Activated CD8-positive, alpha-beta T cell treated with anti-CD3 and anti-CD28 coated beads for 36 hours (primary cell): ENCODE measurements at regions of chr18 and their contacts with region 1.

Region 1: GRCh38 chr18:3062798-3063680 is 50.1 kb upstream of the LPIN2 start:
- DNase-seq: peak; percentile 88
- ATAC-seq: peak; percentile 32
- H3K4me3 Mint-ChIP-seq: peak overlapping the region; percentile 43
- H3K27ac Mint-ChIP-seq: peak overlapping the region; percentile 100
- H3K4me1 Mint-ChIP-seq: peaks cover 64% of the 10 kb centered on the region
- H3K27me3 Mint-ChIP-seq: no peaks in the 10 kb centered on the region
- CTCF ChIP-seq: peak; percentile 92

Region 2: DNA sequence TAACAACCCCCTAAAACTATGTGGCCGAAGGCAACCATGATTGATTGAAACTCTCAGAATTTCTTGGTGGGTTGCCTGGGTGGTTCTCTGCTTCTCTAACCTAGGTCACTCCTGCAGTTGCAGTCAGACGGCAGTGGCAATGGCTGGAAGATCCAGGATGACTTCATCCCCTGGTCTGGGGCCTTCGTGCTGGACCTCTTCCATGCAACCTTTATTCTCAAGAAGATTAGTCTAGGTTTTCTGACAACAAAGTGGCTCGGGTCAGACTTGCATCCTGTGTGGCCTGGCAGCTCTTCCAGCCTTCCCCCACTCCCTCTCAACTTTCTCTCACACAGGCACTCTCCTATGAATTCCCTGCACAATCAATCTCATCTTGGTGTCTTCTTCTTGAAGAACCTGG is 568.1 kb before region 1 on chr18:
- CTCF ChIA-PET with region 1: no interaction called
- POLR2A ChIA-PET with region 1: no interaction called
- intact Hi-C with region 1: no loop called
- DNase-seq: no peak
- ATAC-seq: no peak
- H3K4me3 Mint-ChIP-seq: no peak overlapping the region
- H3K27ac Mint-ChIP-seq: no peak overlapping the region
- H3K4me1 Mint-ChIP-seq: no peaks in the 10 kb centered on the region
- H3K27me3 Mint-ChIP-seq: peaks cover 4% of the 10 kb centered on the region
- CTCF ChIP-seq: no peak

Region 3: GRCh38 chr18:2948038-2948437 is 115.0 kb before region 1 on chr18:
- CTCF ChIA-PET with region 1: interaction called, 21 read pairs
- POLR2A ChIA-PET with region 1: no interaction called
- intact Hi-C with region 1: no loop called
- DNase-seq: no peak
- ATAC-seq: peak; percentile 47
- H3K4me3 Mint-ChIP-seq: no peak overlapping the region
- H3K27ac Mint-ChIP-seq: no peak overlapping the region
- H3K4me1 Mint-ChIP-seq: peaks cover 47% of the 10 kb centered on the region
- H3K27me3 Mint-ChIP-seq: no peaks in the 10 kb centered on the region
- CTCF ChIP-seq: no peak

Region 4: GRCh38 chr18:2994603-2995432 is 68.2 kb before region 1 on chr18:
- CTCF ChIA-PET with region 1: interaction called, 133 read pairs
- POLR2A ChIA-PET with region 1: interaction called, 41 read pairs
- intact Hi-C with region 1: loop called (anchors 5 kb)
- DNase-seq: peak; percentile 93
- ATAC-seq: peak; percentile 73
- H3K4me3 Mint-ChIP-seq: peak overlapping the region; percentile 36
- H3K27ac Mint-ChIP-seq: peak overlapping the region; percentile 87
- H3K4me1 Mint-ChIP-seq: peaks cover 84% of the 10 kb centered on the region
- H3K27me3 Mint-ChIP-seq: no peaks in the 10 kb centered on the region
- CTCF ChIP-seq: peak; percentile 76

Region 5: DNA sequence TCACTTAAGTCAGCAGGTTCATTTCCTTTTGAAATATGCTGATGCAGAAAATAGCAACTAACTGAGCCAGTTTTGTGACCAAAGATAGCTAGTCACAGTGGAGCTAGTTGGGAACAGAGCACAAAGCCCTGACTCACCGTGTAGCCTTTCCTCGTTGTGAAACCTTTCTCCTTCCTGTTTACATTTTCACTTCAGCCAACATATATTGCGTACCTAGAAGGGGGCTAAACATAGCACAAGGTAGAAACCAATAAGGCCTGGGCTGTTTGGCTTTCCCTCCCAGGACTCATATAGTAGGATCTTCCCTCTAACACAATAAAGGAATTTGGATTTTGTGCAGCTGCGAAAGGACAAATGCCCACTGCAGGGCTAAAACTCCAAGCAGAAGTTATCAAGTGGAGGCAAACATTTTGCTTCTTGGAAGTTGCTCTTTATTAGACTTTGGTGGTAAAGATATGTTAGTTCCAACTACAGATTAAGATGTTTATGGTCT is 25.6 kb before region 1 on chr18:
- CTCF ChIA-PET with region 1: interaction called, 14 read pairs
- POLR2A ChIA-PET with region 1: no interaction called
- intact Hi-C with region 1: no loop called
- DNase-seq: peak; percentile 46
- ATAC-seq: peak; percentile 95
- H3K4me3 Mint-ChIP-seq: no peak overlapping the region
- H3K27ac Mint-ChIP-seq: no peak overlapping the region
- H3K4me1 Mint-ChIP-seq: peaks cover 19% of the 10 kb centered on the region
- H3K27me3 Mint-ChIP-seq: no peaks in the 10 kb centered on the region
- CTCF ChIP-seq: no peak

Region 6: DNA sequence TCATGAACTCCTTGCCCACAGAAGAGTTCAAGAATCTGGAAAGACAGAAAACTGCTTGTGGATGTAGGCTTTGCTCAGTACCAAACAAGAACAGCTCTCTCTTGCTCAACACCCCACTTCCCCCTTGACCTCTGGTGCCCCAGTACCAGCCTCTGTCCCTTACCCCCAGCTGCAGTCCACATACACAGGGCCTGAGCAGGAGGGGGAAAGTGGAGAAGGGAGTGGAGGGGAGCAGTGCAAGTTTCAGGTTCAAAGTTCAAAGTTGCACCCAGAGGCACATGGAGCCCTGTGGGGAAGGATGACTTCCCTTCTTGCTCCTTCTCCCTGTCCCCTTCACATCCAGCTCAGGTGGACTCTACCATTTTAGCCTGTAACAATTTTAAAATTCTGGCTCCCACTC is 11.0 kb after region 1 on chr18:
- CTCF ChIA-PET with region 1: interaction called, 56 read pairs
- POLR2A ChIA-PET with region 1: interaction called, 10 read pairs
- intact Hi-C with region 1: no loop called
- DNase-seq: no peak
- ATAC-seq: no peak
- H3K4me3 Mint-ChIP-seq: no peak overlapping the region
- H3K27ac Mint-ChIP-seq: no peak overlapping the region
- H3K4me1 Mint-ChIP-seq: peaks cover 21% of the 10 kb centered on the region
- H3K27me3 Mint-ChIP-seq: no peaks in the 10 kb centered on the region
- CTCF ChIP-seq: no peak

Region 7: DNA sequence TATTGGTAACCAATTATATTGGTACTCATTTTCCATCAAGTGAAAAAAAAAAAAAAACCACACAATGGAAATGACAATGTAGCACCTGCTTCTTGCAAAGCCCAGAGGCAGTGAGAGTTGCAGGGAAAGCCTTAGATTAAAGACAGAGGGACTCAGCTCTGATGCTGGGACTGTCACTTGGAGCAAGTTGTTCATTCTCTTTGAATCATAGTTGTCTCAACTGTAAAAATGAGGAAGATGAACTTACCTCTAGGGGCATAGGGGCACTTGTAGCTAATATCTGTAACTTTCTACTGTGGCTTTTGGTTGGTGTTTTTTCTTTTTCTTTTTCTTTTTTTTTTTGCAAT is 31.3 kb after region 1 on chr18:
- CTCF ChIA-PET with region 1: interaction called, 25 read pairs
- POLR2A ChIA-PET with region 1: interaction called, 3 read pairs
- intact Hi-C with region 1: no loop called
- DNase-seq: no peak
- ATAC-seq: no peak
- H3K4me3 Mint-ChIP-seq: no peak overlapping the region
- H3K27ac Mint-ChIP-seq: no peak overlapping the region
- H3K4me1 Mint-ChIP-seq: peaks cover 21% of the 10 kb centered on the region
- H3K27me3 Mint-ChIP-seq: no peaks in the 10 kb centered on the region
- CTCF ChIP-seq: no peak

Region 8: DNA sequence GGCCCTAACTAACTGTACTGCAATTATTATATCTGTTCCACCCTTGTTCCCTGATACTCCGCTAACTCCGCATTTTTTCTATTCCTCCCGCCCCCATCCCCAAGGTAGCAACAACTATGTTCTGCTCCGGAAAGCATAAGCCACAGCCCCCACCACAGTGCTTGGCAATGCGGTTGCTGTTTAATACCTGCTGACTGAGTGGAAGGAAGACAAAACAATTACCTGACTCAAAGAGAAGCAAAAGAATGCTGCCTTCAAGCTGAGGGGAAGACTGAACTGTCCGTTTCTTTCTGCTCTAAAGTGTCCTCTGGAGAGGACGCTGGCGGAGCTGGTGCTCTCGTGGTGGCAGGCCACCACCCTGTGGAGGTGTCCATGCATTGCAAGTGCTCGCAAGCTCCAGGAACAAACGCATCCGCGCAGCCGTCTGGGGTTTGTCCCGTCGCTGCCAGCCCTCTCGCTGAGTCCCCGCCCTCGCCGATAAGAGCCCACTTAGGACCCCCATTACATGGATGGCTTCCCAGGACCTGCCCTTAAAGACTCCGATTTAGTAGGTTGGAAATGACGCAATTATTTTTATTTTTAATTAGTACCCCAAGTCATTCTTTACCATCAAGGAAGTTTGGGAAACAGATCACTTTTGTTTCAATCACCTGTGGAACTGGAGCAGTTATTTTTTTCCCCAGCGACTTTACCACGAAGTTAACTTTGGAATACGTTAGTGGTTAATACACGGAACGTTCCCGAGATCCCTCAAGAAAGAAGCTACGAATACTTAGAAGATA is 183.0 kb after region 1 on chr18:
- CTCF ChIA-PET with region 1: interaction called, 20 read pairs
- POLR2A ChIA-PET with region 1: interaction called, 4 read pairs
- intact Hi-C with region 1: loop called (anchors 5 kb)
- DNase-seq: peak; percentile 92
- ATAC-seq: peak; percentile 70
- H3K4me3 Mint-ChIP-seq: peak overlapping the region; percentile 94
- H3K27ac Mint-ChIP-seq: peak overlapping the region; percentile 98
- H3K4me1 Mint-ChIP-seq: peaks cover 29% of the 10 kb centered on the region
- H3K27me3 Mint-ChIP-seq: no peaks in the 10 kb centered on the region
- CTCF ChIP-seq: peak; percentile 96